Posterior vena cava (tissue), 2 donors: ENCODE measurements at regions of chr4 and their contacts with region 1.

Region 1: GRCh38 chr4:55321707-55322264 is 24.3 kb upstream of the SRD5A3 start:
- DNase-seq: no peak

Region 2: GRCh38 chr4:54322818-54323417 is 998.9 kb before region 1 on chr4:
- intact Hi-C with region 1: loop called in 1 of 2 experiments (anchors 10 kb)
- DNase-seq: no peak

Region 3: DNA sequence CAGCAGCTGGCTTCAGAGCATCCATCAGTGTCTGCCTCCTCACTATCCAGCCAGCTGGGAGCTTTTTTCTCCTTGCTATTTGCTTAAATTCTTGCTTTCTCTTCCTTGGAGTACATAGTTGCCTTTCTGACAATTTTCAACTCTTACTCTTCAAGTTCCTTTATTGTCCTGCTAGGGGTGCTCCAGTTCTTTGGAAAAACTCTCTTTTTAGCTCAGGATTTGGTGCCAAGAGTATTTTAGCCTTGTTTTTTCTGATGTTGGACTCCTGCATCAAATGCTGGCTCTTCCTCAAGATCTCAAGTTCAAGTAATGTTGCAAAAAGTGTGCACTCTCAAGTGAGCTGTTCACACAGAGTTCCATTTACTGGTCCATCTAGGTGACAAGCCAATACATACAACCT is 322.8 kb before region 1 on chr4:
- intact Hi-C with region 1: loop called in 1 of 2 experiments (anchors 10 kb)
- DNase-seq: no peak

Region 4: DNA sequence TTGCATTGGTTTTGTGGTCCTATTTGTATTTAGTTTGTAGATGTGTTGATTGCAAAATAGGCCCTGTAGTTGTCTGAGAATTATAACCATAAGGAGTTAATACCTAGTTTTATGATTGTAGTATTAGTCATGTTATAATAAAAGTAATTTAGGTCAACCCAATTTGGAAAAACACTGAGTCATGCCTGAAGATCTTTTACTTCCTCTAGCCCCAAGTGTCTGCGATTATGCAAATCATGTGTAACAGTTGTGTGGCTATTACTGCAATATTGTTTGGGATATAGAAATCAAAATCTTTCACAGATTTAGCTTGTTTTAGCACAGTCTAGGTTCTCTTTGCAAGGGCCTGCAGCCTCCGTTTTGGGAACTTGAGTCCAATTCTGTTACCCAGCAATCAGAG is 36.9 kb after region 1 on chr4:
- intact Hi-C with region 1: no loop called
- DNase-seq: no peak